Heart left ventricle (tissue), 16 donors: ENCODE measurements at regions of chrX and their contacts with region 1.

Region 1: DNA sequence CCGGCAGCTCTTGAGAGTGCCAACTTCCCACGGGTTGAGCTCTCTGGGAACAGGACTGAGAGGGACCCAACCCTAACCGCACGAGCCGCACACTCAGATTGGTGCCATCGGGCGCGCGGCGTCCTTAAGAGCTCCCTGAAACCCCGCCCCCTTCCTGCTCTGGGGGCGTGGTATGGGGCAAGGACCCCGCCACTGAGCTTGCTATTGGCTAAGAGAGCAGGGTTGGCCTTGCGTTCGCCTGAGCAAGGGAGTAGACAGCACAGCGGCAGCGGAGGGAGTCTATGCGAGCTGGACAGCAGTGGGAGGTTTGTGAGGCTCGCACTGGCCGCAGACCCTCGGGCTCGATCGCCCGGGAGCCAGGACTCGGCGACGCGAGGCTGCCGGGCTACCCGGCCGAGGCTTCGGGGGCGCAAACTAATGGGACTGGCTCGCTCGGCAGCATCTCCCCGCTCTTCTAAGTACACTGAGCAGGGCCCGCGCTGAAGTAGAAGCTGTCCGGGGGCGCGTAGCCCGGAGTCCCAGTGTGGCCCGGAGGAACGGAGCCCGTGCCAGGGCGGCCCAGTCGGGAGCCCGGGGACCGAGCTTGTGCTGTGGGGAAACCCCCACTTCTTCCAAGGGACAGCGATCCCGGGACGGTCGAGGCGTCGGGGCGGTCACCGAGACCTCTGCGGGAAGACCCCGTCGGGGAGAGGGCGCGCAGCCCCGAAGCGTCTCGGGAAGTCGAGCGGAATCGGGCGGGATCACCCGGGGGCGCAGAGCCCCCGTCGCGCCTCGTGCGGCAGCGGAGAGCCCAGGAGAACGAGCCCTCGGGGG is at the start of gene EFNB1:
- DNase-seq: peak; percentile 91 to 95 (median 93)
- ATAC-seq: peak; percentile 93 to 96 (median 94)
- H3K4me3 ChIP-seq: peak within 1 kb of the TSS; percentile 63 to 98 (median 81)
- H3K27ac ChIP-seq: peak within 1 kb of the TSS; percentile 65 to 92 (median 85)
- H3K4me1 ChIP-seq: peaks cover 0 to 22% (median 4%) of the 10 kb centered on the region in 12 donors
- H3K27me3 ChIP-seq: peaks cover 0 to 25% (median 0%) of the 10 kb centered on the region in 9 donors
- CTCF ChIP-seq: no peak
- POLR2A ChIP-seq: peak; percentile 72 to 99
- total RNA-seq, gene EFNB1: 15.9 to 78.8 (median 23.1) TPM

Region 2: DNA sequence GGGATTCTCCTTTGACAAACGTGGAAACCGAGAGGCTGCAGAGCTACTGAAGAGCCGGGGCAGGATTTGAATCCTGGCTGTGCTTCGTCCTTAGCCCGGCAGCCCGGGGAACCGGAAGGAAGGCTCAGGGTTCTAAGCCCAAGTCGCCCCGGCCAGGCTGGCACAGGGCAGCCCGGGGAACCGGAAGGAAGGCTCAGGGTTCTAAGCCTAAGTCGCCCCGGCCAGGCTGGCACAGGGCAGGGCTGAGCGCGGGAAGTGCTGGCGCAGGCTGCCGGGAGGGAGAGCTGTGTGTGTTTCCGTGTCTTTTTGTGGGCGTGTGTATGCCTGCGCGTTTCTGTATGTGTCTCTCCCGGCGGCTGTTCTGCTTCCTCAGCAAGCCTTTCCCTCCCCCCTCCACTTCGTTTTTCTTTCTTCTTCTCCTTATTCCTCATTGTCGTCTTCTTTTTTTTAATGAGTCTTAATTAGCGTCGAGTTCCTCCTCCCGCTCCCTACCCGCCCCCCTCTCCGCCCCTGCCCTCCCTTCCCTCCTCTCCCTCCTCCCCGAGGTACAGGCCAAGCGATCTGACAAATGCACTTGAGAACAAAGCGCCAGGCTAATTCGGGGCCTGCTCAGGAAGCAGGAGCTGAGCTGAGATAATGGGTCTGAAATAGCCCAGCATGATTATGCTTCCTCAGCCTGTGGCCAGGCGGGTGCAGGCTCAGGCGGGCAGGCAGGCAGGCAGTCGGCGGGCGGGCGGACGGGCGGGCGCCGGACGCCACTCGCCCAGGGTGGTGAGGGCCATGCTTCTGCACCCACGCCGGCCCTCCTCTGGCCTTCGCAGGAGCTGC is 65.8 kb after region 1 on chrX:
- intact Hi-C with region 1: loop called in 7 of 10 experiments (anchors 1 to 10 kb)
- DNase-seq: peak; percentile 77 to 86 (median 81)
- ATAC-seq: peak; percentile 92 to 93 (median 92)
- H3K4me3 ChIP-seq: peak overlapping the region in 9 of 12 donors; percentile 2 to 42 (median 31)
- H3K27ac ChIP-seq: peak overlapping the region; percentile 83 to 97 (median 91)
- H3K4me1 ChIP-seq: peaks cover 0 to 47% (median 20%) of the 10 kb centered on the region in 12 donors
- H3K27me3 ChIP-seq: peaks cover 0 to 3% (median 0%) of the 10 kb centered on the region in 9 donors
- CTCF ChIP-seq: no peak
- POLR2A ChIP-seq: peak in 1 of 2 donors; percentile 47

Region 3: DNA sequence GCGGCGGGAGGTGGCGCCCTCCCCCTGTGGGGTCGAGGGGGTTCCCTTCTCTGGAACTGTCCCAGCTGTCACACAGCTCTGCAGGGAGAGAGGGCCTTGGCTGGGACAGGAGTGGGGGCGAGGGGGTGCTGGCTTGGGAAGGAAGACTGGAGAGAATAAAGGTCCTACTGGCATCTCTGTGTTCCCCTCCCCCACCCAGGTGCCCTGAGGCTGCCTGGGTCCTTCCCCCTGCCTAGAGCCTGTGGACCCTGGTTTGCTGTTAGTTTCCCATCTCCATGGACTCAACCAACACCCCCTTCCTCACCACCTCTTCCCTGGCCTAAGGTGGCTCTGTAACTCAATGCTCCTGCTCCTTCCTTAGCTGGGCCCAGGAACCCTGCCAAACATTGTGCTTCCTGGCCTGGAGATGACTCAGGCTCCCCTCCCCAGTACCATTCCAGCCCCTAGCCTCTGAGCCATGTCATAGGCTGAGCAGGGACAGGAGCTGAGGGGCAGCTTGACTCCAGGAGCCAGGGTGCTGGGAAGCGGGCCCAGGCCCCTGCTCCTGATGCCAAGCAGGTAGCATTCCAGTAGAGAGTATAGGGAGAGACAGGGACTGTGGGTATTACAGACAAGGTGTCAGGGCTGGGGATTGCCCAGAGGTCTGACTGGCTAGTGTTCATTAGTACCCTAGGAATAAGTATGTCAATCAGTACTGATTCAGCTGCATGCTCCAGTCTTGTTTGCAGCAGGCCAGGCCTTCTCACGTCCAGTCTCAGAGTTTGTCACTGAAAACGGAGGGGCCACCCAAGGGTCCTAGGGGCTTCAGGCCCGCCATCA is 100.6 kb after region 1 on chrX:
- intact Hi-C with region 1: loop called in 4 of 10 experiments (anchors 1 to 10 kb)
- DNase-seq: peak; percentile 26 to 77 (median 54)
- ATAC-seq: peak in 3 of 4 donors; percentile 68 to 74 (median 68)
- H3K4me3 ChIP-seq: no peak overlapping the region
- H3K27ac ChIP-seq: peak overlapping the region in 11 of 12 donors; percentile 27 to 87 (median 56)
- H3K4me1 ChIP-seq: peaks cover 0 to 47% (median 14%) of the 10 kb centered on the region in 12 donors
- H3K27me3 ChIP-seq: no peaks in the 10 kb centered on the region
- CTCF ChIP-seq: no peak
- POLR2A ChIP-seq: peak in 1 of 2 donors; percentile 16

Region 4: GRCh38 chrX:68995780-68996551 is 167.0 kb after region 1 on chrX:
- intact Hi-C with region 1: loop called in 4 of 10 experiments (anchors 5 to 10 kb)
- DNase-seq: peak; percentile 69 to 75 (median 72)
- ATAC-seq: peak; percentile 85 to 92 (median 86)
- H3K4me3 ChIP-seq: peak overlapping the region in 8 of 12 donors; percentile 3 to 35 (median 23)
- H3K27ac ChIP-seq: peak overlapping the region; percentile 47 to 82 (median 72)
- H3K4me1 ChIP-seq: peaks cover 0 to 48% (median 27%) of the 10 kb centered on the region in 12 donors
- H3K27me3 ChIP-seq: peaks cover 0 to 16% (median 0%) of the 10 kb centered on the region in 9 donors
- CTCF ChIP-seq: no peak
- POLR2A ChIP-seq: no peak

Region 5: DNA sequence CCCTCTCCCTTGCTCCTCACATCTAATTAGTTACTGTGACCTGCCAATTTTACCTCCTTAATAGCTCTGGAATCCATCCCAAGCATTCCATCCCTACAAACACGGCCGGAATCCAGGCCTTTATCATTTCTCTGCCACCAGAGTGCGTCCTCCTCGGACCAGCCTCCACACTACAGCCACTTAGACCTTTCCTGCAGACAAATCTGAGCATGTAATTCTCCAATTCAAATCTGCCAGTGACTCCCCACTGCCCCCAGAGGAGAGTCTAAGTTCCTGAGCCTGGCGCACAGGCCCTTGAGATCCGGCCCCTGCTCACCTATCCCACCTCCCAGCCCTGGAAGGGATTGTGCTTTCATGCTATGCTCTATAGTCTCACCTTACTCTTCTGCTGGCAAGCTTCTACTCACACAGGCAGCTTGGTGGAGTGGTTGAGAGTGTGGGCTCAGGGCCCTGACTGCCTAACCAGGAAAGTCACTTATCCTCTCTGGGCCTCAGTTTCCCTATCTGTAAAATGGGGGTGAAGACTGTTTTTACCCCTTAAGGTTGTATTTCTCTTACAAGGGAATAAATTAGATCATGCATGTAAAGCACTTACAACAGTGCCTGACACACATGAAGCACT is 305.1 kb after region 1 on chrX:
- intact Hi-C with region 1: loop called in 1 of 10 experiments (anchors 10 kb)
- DNase-seq: peak in 1 of 5 donors; percentile 24
- ATAC-seq: peak in 3 of 4 donors; percentile 16 to 59 (median 39)
- H3K4me3 ChIP-seq: no peak overlapping the region
- H3K27ac ChIP-seq: no peak overlapping the region
- H3K4me1 ChIP-seq: peaks cover 0 to 12% (median 0%) of the 10 kb centered on the region in 12 donors
- H3K27me3 ChIP-seq: peaks cover 0 to 50% (median 0%) of the 10 kb centered on the region in 9 donors
- CTCF ChIP-seq: peak in 10 of 12 donors; percentile 12 to 54 (median 33)
- POLR2A ChIP-seq: no peak

Region 6: DNA sequence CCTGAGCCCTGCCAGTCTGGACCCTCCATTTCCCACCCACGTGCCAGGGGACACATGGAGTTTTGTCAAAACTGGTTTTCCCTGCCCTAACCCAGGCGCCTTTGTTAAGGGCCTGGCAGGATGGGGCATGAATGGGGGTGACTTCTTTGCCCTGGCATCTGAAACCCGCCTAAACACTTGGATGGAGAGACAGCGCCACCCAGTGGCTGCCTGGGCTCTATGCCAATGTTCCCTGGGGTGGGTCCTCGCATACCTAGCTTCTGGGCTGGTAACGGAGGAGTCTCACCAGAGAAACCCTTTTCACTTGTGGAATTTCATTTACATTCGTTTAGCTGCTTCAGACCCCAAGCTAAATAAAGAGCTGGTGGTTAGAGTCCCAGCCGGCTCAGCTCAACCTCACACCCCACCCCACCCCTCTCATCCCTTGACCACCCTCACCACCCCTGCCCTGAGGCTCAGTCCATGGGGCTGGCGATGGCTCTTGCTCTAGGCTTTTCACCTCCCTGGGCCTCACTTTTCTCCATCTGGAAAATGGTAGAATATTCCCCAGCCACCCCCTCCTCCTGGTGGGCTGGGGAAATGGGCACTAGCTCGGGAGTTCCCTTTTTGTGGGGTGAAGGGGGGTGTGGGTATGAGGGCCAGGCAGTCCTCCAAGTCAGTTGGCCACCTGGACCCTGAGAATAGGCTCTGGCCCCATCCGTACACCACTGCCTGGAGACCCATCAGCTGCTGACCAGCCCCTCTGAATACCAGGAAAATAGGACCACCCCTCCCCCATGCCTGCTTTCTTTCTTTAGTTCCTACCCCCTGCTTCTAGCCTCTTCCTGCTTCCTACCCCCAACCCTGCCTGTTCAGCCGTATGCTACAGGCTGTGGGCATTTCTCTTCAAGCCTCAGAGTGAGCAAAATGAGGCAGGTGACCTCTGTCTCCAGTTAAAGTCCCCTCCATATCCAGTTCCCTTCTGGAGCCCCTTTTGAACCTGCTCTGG is 393.5 kb after region 1 on chrX:
- intact Hi-C with region 1: loop called in 8 of 10 experiments (anchors 1 to 5 kb)
- DNase-seq: peak; percentile 43 to 78 (median 58)
- ATAC-seq: peak; percentile 61 to 88 (median 80)
- H3K4me3 ChIP-seq: no peak overlapping the region
- H3K27ac ChIP-seq: no peak overlapping the region
- H3K4me1 ChIP-seq: peaks cover 0 to 8% (median 0%) of the 10 kb centered on the region in 12 donors
- H3K27me3 ChIP-seq: peaks cover 0 to 20% (median 0%) of the 10 kb centered on the region in 9 donors
- CTCF ChIP-seq: peak; percentile 60 to 75 (median 70)
- POLR2A ChIP-seq: no peak

Region 7: DNA sequence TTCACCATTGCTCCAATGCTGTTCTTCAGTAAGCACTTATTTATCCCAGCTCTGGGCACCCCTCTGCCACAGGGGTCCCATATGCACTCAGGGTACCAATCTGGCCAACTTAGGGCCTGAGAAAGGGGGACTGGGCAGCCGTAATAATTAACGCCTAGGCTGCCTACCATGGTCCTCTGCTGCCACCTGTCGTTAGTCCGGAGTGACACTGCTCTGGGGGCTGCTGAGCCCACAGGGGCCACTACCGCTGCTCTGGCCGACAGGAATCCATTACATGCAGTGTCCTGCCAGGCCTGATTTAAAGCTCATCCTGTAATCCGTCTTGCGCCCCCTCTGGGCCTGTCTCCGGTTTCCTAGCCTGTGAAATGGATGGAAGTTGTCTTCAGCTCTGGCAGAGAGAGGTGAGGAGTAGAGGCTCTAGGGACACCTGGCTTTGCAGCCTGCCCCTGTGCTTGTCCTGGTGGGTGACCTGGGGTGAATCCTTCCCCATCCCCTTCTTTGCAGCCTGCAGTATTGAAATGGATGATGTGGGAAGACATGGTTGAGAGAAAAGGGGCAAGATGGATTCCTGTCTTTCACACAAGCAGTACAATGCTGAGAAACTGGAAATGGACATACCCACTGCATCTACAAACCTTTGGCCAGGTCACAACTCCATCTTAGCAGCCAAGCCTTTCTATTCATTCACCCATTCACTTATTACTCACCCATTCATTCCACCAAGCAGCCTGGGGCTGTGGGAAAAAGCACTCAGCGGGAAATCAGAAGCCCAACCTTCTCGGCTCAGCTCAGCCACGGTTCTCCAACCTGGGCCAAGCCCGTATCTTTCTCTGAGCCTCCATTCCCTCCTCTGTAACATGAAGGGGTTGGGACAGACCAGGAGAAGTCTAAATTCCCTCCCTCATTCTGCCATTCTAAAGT is 558.9 kb after region 1 on chrX:
- intact Hi-C with region 1: loop called in 8 of 10 experiments (anchors 5 to 10 kb)
- DNase-seq: peak in 4 of 5 donors; percentile 22 to 51 (median 42)
- ATAC-seq: peak; percentile 61 to 81 (median 70)
- H3K4me3 ChIP-seq: no peak overlapping the region
- H3K27ac ChIP-seq: no peak overlapping the region
- H3K4me1 ChIP-seq: peaks cover 0 to 4% (median 0%) of the 10 kb centered on the region in 12 donors
- H3K27me3 ChIP-seq: peaks cover 0 to 26% (median 0%) of the 10 kb centered on the region in 9 donors
- CTCF ChIP-seq: peak; percentile 45 to 77 (median 65)
- POLR2A ChIP-seq: no peak